HepG2 (cell line): ENCODE measurements at regions of chr2 and their contacts with region 1.

Region 1: DNA sequence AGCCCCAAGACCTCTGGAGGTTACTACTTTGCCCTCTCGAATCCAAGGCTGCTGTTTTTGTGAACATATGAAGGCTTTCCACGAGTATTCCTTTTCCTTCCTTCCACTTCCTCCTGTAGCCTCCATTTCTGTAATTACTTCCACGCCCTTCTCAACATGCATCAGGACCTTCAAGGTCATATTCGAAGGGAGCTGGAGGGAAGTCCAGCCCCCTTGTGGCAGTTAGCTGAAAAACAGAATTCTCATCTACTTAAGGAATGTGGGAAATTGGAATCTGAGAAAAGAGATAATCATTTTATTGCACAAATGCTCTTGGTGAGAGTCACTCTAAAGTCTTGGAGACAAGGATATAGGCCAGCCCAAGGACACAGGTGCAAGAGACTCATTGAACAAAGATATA is 1000.2 kb downstream of the TDRD15 start:
- DNase-seq: peak; percentile 10
- ATAC-seq: 0 out of 3 replicates have a peak, but pooled peaks have one; percentile 26
- H3K4me3 ChIP-seq: no peak overlapping the region
- H3K27ac ChIP-seq: no peak overlapping the region
- H3K4me1 ChIP-seq: no peaks in the 10 kb centered on the region
- H3K27me3 ChIP-seq: no peaks in the 10 kb centered on the region
- CTCF ChIP-seq: peak; percentile 14; the same call in 1 of the 2 replicates
- EP300 ChIP-seq: no peak
- POLR2A ChIP-seq: no peak
- RAD21 ChIP-seq: 0 out of 2 replicates have a peak, but pooled peaks have one; percentile 19

Region 2: DNA sequence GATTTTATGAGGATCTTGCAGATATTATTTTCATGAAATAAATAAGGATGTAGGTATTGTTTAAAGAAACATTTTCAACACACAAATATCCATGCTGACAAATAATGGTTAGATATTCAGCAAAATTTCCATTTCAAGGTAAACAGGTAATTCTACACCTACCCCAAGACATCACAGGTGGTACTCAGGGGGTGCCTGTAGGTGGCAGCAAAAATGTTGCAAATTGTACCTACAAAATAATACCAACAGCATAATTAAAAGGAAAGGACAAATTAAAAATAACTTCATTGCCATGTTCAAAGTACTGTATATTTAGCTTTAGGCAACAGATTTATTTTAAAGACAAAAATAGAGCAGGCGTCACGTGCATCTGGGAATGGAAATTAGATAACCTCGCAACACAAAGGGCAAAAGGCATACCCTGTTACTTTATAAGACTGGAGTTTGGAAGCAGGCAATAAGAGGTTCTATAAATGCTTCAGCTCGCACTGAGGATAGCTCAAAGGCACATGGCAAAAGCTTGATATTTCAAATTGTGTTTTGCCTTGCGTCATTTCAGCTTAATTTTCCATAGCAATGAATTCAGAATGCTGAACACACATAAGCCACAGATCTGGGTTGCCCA is 369.7 kb before region 1 on chr2:
- CTCF ChIA-PET with region 1: no interaction called
- POLR2A ChIA-PET with region 1: no interaction called
- in situ Hi-C with region 1: no loop called
- intact Hi-C with region 1: loop called (anchors 5 kb)
- DNase-seq: peak; percentile 10
- ATAC-seq: peak; percentile 71
- H3K4me3 ChIP-seq: no peak overlapping the region
- H3K27ac ChIP-seq: no peak overlapping the region
- H3K4me1 ChIP-seq: no peaks in the 10 kb centered on the region
- H3K27me3 ChIP-seq: no peaks in the 10 kb centered on the region
- CTCF ChIP-seq: peak; percentile 53
- EP300 ChIP-seq: no peak
- POLR2A ChIP-seq: no peak
- RAD21 ChIP-seq: no peak

Region 3: GRCh38 chr2:21928292-21928691 is 195.7 kb before region 1 on chr2:
- CTCF ChIA-PET with region 1: no interaction called
- POLR2A ChIA-PET with region 1: no interaction called
- in situ Hi-C with region 1: no loop called
- intact Hi-C with region 1: loop called (anchors 2 kb)
- DNase-seq: no peak
- ATAC-seq: no peak
- H3K4me3 ChIP-seq: no peak overlapping the region
- H3K27ac ChIP-seq: no peak overlapping the region
- H3K4me1 ChIP-seq: no peaks in the 10 kb centered on the region
- H3K27me3 ChIP-seq: no peaks in the 10 kb centered on the region
- CTCF ChIP-seq: no peak
- EP300 ChIP-seq: no peak
- POLR2A ChIP-seq: no peak
- RAD21 ChIP-seq: no peak

Region 4: GRCh38 chr2:22002066-22002465 is 121.9 kb before region 1 on chr2:
- CTCF ChIA-PET with region 1: no interaction called
- POLR2A ChIA-PET with region 1: no interaction called
- in situ Hi-C with region 1: no loop called
- intact Hi-C with region 1: loop called (anchors 10 kb)
- DNase-seq: no peak
- ATAC-seq: no peak
- H3K4me3 ChIP-seq: no peak overlapping the region
- H3K27ac ChIP-seq: no peak overlapping the region
- H3K4me1 ChIP-seq: no peaks in the 10 kb centered on the region
- H3K27me3 ChIP-seq: no peaks in the 10 kb centered on the region
- CTCF ChIP-seq: no peak
- EP300 ChIP-seq: no peak
- POLR2A ChIP-seq: no peak
- RAD21 ChIP-seq: no peak